ENCODE measurements at regions of chr5 and their contacts with region 1.

Region 1: GRCh38 chr5:141420855-141421496 is at the start of gene PCDHGA11:
- DNase-seq: peak; percentile 78
- H3K4me3 ChIP-seq: peak within 1 kb of the TSS; percentile 39 to 83 (median 66)
- H3K27ac ChIP-seq: no peak within 1 kb of the TSS
- H3K4me1 ChIP-seq: peaks cover 15% of the 10 kb centered on the region
- H3K27me3 ChIP-seq: peaks cover 40 to 84% of the 10 kb centered on the region in 2 experiments
- CTCF ChIP-seq: peak; percentile 53 to 71
- POLR2A ChIP-seq: no peak
- total RNA-seq, gene PCDHGA11: 10.3 and 11.5 TPM in 2 replicates

Region 2: GRCh38 chr5:141155540-141156374 is 265.2 kb before region 1 on chr5:
- CTCF ChIA-PET with region 1: no interaction called
- POLR2A ChIA-PET with region 1: no interaction called
- dilution Hi-C with region 1: no loop called
- intact Hi-C with region 1: no loop called
- DNase-seq: no peak
- H3K4me3 ChIP-seq: no peak overlapping the region
- H3K27ac ChIP-seq: no peak overlapping the region
- H3K4me1 ChIP-seq: no peaks in the 10 kb centered on the region
- H3K27me3 ChIP-seq: no peaks in the 10 kb centered on the region
- CTCF ChIP-seq: no peak
- POLR2A ChIP-seq: no peak

Region 3: DNA sequence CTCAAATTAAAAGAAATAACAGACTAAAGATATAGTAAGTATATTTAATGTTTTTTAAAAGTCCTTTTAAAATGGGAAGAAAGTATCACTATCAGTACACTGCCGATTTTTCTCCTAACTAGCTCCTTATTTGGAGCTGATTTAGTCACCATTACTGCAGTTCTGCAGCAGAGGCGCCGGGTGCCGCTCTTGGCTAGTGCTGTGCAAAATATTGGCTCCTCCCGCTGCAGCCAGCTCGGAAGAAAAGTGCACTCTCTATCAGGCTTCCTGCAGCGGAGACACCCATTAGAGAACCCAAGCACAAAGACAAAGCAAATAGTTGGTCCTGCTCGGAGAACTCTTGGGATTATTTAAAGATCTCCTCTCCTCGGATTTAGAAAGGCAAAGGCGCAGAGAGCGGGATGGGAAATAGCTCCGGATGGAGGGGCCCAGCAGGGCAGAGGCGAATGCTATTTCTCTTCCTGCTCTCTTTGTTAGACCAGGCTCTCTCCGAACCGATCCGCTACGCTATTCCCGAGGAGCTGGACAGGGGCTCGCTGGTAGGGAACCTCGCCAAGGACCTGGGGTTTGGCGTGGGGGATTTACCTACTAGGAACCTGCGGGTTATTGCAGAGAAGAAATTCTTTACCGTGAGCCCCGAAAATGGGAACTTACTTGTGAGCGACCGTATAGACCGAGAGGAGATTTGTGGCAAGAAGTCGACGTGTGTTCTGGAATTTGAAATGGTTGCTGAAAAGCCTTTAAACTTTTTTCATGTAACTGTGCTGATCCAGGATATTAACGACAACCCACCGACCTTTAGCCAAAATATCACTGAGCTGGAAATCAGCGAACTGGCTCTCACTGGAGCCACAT is 50.8 kb before region 1 on chr5 and contains the start of gene PCDHGB3:
- CTCF ChIA-PET with region 1: interaction called, 17 read pairs
- POLR2A ChIA-PET with region 1: no interaction called
- dilution Hi-C with region 1: no loop called
- intact Hi-C with region 1: loop called (anchors 5 kb)
- DNase-seq: peak; percentile 40
- H3K4me3 ChIP-seq: peak within 1 kb of the TSS in 1 of 3 experiments; percentile 23
- H3K27ac ChIP-seq: no peak within 1 kb of the TSS
- H3K4me1 ChIP-seq: no peaks in the 10 kb centered on the region
- H3K27me3 ChIP-seq: peaks cover 40 to 91% of the 10 kb centered on the region in 2 experiments
- CTCF ChIP-seq: peak in 1 of 2 donors; percentile 24
- POLR2A ChIP-seq: no peak
- total RNA-seq, gene PCDHGB3: 1.7 and 2.0 TPM in 2 replicates

Region 4: DNA sequence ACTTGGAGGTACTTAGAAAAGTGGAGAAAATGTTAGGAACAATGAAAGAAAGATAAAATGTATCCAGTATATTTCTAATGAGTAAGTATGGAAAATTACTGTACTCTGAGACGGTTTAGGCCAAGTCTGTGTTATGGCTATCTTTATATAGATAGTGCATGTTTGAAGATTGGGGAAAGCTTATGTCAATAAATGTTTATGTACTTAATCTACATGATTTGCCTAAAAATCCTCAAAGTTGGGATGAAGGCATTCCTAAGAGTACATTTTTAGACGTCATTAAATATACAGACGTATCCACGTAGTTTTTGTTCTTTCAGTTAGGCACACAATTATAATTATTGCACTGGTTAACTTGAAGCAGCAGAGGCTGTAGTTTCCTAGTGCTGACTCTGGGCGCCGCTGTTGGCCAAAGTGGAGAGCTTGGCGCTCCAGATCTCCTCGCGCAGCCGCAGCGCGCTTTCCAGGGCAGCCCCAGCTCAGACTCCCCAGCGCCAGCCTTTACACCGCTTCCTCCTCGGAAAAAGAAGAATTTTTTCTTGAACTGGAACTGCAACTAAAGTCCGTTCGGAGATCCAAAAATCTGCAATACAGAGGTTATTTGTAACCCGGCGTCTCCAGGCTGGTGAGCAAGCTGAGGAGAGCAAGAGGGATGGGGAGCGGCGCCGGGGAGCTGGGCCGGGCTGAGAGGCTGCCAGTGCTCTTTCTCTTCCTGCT is 33.6 kb before region 1 on chr5 and contains the start of gene PCDHGB4:
- CTCF ChIA-PET with region 1: interaction called, 10 read pairs
- POLR2A ChIA-PET with region 1: no interaction called
- dilution Hi-C with region 1: no loop called
- intact Hi-C with region 1: no loop called
- DNase-seq: peak; percentile 30
- H3K4me3 ChIP-seq: peak within 1 kb of the TSS in 2 of 3 experiments; percentile 9 to 22
- H3K27ac ChIP-seq: no peak within 1 kb of the TSS
- H3K4me1 ChIP-seq: no peaks in the 10 kb centered on the region
- H3K27me3 ChIP-seq: peaks cover 35 to 78% of the 10 kb centered on the region in 2 experiments
- CTCF ChIP-seq: peak; percentile 46 to 51
- POLR2A ChIP-seq: no peak
- total RNA-seq, gene PCDHGB4: 4.4 and 6.5 TPM in 2 replicates

Region 5: GRCh38 chr5:141402553-141403260 is 18.3 kb before region 1 on chr5 and contains the start of gene PCDHGA9:
- CTCF ChIA-PET with region 1: interaction called, 31 read pairs
- POLR2A ChIA-PET with region 1: no interaction called
- dilution Hi-C with region 1: no loop called
- intact Hi-C with region 1: no loop called
- DNase-seq: no peak
- H3K4me3 ChIP-seq: peak within 1 kb of the TSS in 2 of 3 experiments; percentile 9 to 28
- H3K27ac ChIP-seq: no peak within 1 kb of the TSS
- H3K4me1 ChIP-seq: peaks cover 2% of the 10 kb centered on the region
- H3K27me3 ChIP-seq: peaks cover 47 to 68% of the 10 kb centered on the region in 2 experiments
- CTCF ChIP-seq: peak; percentile 37 to 57
- POLR2A ChIP-seq: no peak
- total RNA-seq, gene PCDHGA9: 3.5 and 3.9 TPM in 2 replicates

Region 6: GRCh38 chr5:141475625-141476131 is 54.7 kb after region 1 on chr5 and contains the start of gene PCDHGC3:
- CTCF ChIA-PET with region 1: interaction called, 22 read pairs
- POLR2A ChIA-PET with region 1: no interaction called
- dilution Hi-C with region 1: no loop called
- intact Hi-C with region 1: loop called (anchors 2 kb)
- DNase-seq: peak; percentile 96
- H3K4me3 ChIP-seq: peak within 1 kb of the TSS; percentile 32 to 70 (median 50)
- H3K27ac ChIP-seq: no peak within 1 kb of the TSS
- H3K4me1 ChIP-seq: peaks cover 7% of the 10 kb centered on the region
- H3K27me3 ChIP-seq: peaks cover 0 to 5% of the 10 kb centered on the region in 2 experiments
- CTCF ChIP-seq: peak in 1 of 2 donors; percentile 8
- POLR2A ChIP-seq: no peak
- total RNA-seq, gene PCDHGC3: 25.4 and 36.1 TPM in 2 replicates

Region 7: GRCh38 chr5:141524604-141525597 is 103.9 kb after region 1 on chr5:
- CTCF ChIA-PET with region 1: interaction called, 102 read pairs
- POLR2A ChIA-PET with region 1: no interaction called
- dilution Hi-C with region 1: no loop called
- intact Hi-C with region 1: loop called (anchors 1 kb)
- DNase-seq: peak; percentile 96
- H3K4me3 ChIP-seq: no peak overlapping the region
- H3K27ac ChIP-seq: peak overlapping the region; percentile 22
- H3K4me1 ChIP-seq: peaks cover 29% of the 10 kb centered on the region
- H3K27me3 ChIP-seq: no peaks in the 10 kb centered on the region
- CTCF ChIP-seq: peak; percentile 99 to 100
- POLR2A ChIP-seq: no peak

Measured in endothelial cell of umbilical vein (primary cell).